Left ventricle myocardium superior (tissue), 1 donor: ENCODE measurements at regions of chr3 and their contacts with region 1.

Region 1: DNA sequence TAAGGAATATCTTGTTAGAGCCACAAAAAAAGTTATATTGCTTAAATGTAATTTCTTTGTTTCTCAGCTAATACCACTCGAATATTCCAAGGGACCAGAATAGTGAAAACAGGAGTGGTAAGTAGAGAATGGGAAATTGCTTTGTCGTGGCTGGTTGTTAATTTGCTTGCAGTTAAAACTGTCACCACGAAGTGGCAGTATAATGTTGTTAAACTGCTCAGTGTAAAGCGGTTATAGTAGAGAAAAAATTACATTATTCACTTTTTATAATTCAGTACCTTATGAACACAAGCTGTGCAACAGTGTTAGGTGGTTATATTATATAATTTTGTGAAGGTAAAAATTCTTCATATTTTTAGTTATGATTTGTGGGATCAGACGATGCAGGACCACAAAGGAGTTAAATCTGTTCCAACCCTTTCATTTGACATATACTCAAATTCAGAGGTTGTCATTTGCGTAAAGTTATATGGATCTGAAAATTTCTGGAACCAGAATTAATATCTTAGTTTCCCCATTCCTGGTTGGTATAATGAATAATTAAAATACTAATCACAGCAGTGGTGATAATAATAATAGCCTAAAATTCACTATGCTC is 171.8 kb downstream of the FEZF2 start:
- DNase-seq: no peak
- ATAC-seq: peak; percentile 43

Region 2: GRCh38 chr3:61778145-61778494 is 423.4 kb before region 1 on chr3:
- intact Hi-C with region 1: no loop called
- DNase-seq: no peak
- ATAC-seq: no peak

Region 3: DNA sequence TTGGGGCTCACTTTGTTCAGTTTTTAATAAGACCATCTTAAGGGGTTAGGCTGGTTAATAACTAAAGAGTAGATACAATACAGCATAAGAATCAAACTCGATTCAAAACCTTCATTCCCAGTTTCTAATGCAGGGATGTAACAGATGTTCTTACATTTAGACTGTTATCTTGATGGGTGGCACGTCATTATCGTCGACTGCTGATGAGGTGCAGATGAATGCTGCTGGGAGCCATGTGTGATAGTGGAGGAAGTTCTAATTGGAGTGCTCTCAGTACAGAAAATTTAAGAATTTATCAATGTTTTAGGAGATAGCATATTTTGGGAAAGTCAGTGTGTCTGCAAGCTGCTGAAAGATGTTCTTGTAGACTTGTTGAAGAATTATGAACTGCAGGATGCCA is 308.6 kb before region 1 on chr3:
- intact Hi-C with region 1: no loop called
- DNase-seq: no peak
- ATAC-seq: no peak

Region 4: GRCh38 chr3:62119151-62119550 is 82.4 kb before region 1 on chr3:
- intact Hi-C with region 1: no loop called
- DNase-seq: no peak
- ATAC-seq: no peak

Region 5: GRCh38 chr3:62319570-62320246 is 118.2 kb after region 1 on chr3:
- intact Hi-C with region 1: loop called (anchors 10 kb)
- DNase-seq: no peak
- ATAC-seq: no peak